ENCODE measurements at regions of chr1 and their contacts with region 1.

Region 1: DNA sequence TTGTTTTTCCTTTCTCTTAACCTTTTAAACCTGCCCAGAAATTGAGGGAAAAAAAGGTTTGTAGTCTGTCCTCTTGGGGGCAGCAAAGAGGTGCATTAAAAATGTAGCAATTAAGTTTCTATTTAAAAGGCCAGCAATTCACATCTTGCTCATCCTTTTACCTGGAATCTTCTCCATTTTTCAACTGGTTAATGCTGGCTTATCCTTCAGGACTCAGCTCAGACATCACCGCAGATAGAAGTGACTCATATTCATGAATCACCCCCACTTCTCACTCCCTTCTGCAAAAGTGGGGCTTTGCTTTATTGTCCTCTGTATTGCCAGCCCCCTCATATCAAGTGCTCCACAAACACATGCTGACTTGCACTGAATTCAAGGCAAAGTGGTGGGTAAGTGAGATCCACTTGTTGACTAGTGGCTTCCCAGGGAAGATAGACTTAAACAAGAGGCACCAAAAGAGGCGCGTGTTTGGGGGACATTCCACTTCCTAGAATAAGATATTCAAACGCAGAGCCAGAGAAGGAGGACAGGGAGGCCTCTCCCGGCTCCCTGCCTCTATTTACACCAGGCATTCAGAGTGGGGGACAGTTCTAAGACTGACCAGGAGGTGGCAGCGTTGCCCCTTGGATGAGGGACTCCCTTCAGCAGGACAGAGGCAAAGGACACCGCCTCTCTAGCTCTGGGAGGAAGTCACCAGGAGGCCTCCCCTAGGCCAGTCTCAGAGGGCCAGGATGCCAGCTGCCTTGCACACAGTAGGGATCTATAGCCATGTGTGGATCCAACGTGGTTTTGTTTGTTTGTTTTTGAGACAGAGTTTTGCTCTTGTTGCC is 23.2 kb upstream of the ZNF648 start:
- DNase-seq: peak; percentile 78 to 96 (median 86)
- H3K4me3 ChIP-seq: no peak overlapping the region
- H3K27ac ChIP-seq: peak overlapping the region in 2 of 5 donors; percentile 25 to 37
- H3K4me1 ChIP-seq: peaks cover 0 to 6% of the 10 kb centered on the region in 2 donors
- H3K27me3 ChIP-seq: no peaks in the 10 kb centered on the region
- CTCF ChIP-seq: peak; percentile 69 to 96 (median 82)
- POLR2A ChIP-seq: no peak

Region 2: DNA sequence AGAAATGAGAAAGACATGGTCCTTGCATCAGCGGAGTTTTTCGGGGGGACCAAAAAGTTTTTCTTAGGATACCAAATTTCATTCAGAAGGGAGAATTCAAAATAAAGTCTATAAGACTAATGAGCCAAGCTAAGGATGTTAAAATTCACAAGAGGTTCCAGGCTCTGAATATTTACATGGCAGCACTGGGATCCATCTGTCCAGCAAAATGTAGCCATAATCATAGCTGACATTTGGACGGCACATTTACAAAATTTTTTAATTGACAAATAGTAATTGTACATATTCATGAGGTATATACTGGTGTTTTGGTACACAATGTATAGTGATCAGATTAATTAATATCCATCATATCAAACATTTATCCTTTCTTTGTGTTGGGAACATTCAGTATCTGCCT is 131.1 kb before region 1 on chr1:
- intact Hi-C with region 1: no loop called
- DNase-seq: no peak
- H3K4me3 ChIP-seq: no peak overlapping the region
- H3K27ac ChIP-seq: no peak overlapping the region
- H3K4me1 ChIP-seq: no peaks in the 10 kb centered on the region
- H3K27me3 ChIP-seq: no peaks in the 10 kb centered on the region
- CTCF ChIP-seq: no peak
- POLR2A ChIP-seq: no peak

Region 3: DNA sequence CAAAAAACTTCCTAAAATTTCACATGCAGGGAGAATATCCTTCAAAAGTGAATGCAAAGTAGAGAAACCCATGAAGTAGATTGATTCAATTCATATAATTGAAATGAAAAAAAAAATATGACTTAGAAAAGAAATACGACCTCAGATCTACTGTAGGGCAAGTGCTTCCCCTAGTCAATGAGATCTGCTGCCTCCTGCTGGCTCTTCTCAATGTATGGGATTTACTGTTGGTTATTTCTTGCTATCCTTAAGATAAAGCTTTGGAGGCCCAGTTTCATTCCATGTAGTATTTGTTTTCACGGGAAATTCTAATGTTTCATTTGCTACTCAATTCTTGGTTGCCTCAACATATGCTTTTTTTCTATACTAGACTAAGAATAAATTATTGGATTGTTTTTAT is 69.3 kb before region 1 on chr1:
- intact Hi-C with region 1: no loop called
- DNase-seq: no peak
- H3K4me3 ChIP-seq: no peak overlapping the region
- H3K27ac ChIP-seq: no peak overlapping the region
- H3K4me1 ChIP-seq: no peaks in the 10 kb centered on the region
- H3K27me3 ChIP-seq: no peaks in the 10 kb centered on the region
- CTCF ChIP-seq: no peak
- POLR2A ChIP-seq: no peak

Region 4: DNA sequence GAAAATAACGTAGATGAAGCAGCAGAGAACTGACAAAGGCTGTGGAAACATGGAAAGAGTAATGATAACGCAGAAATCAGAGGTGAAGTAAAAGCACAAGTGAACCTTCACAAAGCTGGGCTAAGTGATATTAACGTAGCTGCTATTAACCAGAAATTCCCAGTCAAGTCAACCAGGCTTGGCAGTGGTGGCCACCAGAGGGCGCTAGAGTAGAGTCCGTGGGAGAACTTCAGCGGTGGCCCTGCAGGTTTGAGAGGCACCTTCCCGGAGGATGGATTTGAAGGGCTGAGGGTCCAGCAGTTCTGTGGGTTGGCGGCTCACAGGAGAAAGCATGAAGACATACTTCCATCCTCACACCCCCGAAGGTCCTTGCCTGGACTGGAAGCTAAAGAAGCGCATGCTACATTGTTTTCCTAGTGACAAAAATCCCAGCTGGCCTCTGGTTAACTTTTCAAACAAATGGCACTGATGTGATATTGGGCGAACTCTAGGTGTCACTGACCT is 58.5 kb after region 1 on chr1:
- intact Hi-C with region 1: loop called in 1 of 2 experiments (anchors 5 kb)
- DNase-seq: peak; percentile 82 to 97 (median 91)
- H3K4me3 ChIP-seq: no peak overlapping the region
- H3K27ac ChIP-seq: peak overlapping the region in 4 of 5 donors; percentile 39 to 95 (median 74)
- H3K4me1 ChIP-seq: peaks cover 4 to 21% of the 10 kb centered on the region in 2 donors
- H3K27me3 ChIP-seq: no peaks in the 10 kb centered on the region
- CTCF ChIP-seq: peak; percentile 90 to 98 (median 96)
- POLR2A ChIP-seq: peak in 1 of 2 donors; percentile 20

Region 5: GRCh38 chr1:182301467-182302198 is 216.9 kb after region 1 on chr1:
- intact Hi-C with region 1: no loop called
- DNase-seq: no peak
- H3K4me3 ChIP-seq: no peak overlapping the region
- H3K27ac ChIP-seq: no peak overlapping the region
- H3K4me1 ChIP-seq: peaks cover 0 to 3% of the 10 kb centered on the region in 2 donors
- H3K27me3 ChIP-seq: no peaks in the 10 kb centered on the region
- CTCF ChIP-seq: no peak
- POLR2A ChIP-seq: no peak

Region 6: DNA sequence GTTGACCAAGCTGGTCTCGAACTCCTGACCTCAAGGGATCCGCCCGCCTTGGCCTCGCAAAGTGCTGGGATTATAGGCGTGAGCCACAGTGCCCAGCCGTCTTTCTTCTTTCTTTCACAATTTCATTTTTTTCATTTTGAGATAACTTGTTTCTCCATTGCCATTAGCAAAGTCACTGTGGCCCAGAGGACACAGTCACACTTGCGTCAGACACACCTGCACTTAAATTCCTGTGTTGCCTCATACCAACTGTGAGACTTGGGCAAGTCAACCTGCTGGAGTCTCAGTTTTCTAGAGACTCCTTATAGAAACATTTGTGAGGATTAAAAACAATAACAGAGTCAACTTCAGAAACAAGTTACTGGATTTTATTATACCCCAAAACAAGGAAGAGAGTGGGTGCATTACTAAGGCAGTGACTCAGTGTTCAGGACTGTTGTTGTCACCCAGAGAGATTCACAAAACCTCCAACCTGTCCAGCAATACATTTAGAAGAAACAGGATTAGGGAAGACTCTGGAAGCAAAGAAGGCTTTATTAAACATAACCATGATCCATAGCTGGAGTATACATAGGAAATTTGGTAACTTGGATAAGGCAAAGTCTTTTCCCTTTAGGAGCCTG is 313.2 kb after region 1 on chr1:
- intact Hi-C with region 1: loop called (anchors 2 to 5 kb)
- DNase-seq: no peak
- H3K4me3 ChIP-seq: no peak overlapping the region
- H3K27ac ChIP-seq: no peak overlapping the region
- H3K4me1 ChIP-seq: peaks cover 0 to 7% of the 10 kb centered on the region in 2 donors
- H3K27me3 ChIP-seq: no peaks in the 10 kb centered on the region
- CTCF ChIP-seq: no peak
- POLR2A ChIP-seq: no peak

Measured in adrenal gland (tissue), 19 donors.